ENCODE measurements at regions of chr7 and their contacts with region 1.

Region 1: DNA sequence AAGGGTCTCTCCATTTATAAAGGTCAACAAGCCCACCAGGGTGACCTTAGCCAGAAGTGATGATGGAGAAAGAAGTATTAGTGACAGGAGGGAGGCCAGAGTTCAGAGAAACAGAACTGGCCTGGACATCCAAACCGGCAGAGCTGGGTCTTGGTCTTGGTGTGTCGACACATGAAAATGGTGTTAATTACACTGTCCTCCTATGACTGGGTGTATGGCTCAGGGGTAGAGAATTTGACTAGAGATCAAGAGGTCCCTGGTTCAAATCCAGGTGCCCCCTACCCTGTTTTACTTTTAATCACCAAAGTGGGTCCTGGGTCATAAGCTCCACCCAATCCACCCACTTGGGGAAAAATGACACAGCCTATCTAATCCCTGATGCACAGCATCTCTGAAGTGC is 110.6 kb upstream of the ZNF746 start:
- DNase-seq: no peak
- ATAC-seq: no peak
- H3K4me3 ChIP-seq: no peak overlapping the region
- H3K27ac ChIP-seq: no peak overlapping the region
- H3K4me1 ChIP-seq: no peaks in the 10 kb centered on the region
- H3K27me3 ChIP-seq: no peaks in the 10 kb centered on the region
- CTCF ChIP-seq: no peak
- EP300 ChIP-seq: no peak
- POLR2A ChIP-seq: peak; percentile 48; the same call in 1 of the 2 replicates
- RAD21 ChIP-seq: no peak

Region 2: DNA sequence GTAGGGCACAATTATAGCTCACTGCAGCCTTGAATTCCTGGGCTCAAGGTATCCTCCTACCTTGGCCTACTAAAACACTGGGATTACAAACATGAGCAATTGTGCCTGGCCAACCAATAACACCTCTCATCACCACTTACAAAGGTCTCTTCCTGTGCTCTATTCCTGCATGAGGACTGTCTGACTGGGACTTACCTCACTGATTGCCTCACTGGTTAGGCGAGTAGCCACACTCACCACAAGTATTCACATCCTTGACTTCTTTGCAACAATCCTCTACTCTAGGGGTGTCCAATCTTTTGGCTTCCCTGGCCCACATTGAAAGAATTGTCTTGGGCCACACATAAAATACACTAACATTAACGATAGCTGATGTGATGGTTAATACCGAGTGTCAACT is 557.2 kb before region 1 on chr7:
- CTCF ChIA-PET with region 1: no interaction called
- POLR2A ChIA-PET with region 1: no interaction called
- in situ Hi-C with region 1: no loop called
- intact Hi-C with region 1: no loop called
- DNase-seq: no peak
- ATAC-seq: peak; percentile 21; the same call in 2 of the 3 replicates
- H3K4me3 ChIP-seq: no peak overlapping the region
- H3K27ac ChIP-seq: no peak overlapping the region
- H3K4me1 ChIP-seq: no peaks in the 10 kb centered on the region
- H3K27me3 ChIP-seq: peaks cover 5 to 6% of the 10 kb centered on the region in 2 experiments; a peak in 3 of 5 replicates
- CTCF ChIP-seq: no peak
- EP300 ChIP-seq: no peak
- POLR2A ChIP-seq: no peak
- RAD21 ChIP-seq: no peak

Region 3: GRCh38 chr7:149430192-149430591 is 178.0 kb before region 1 on chr7:
- CTCF ChIA-PET with region 1: no interaction called
- POLR2A ChIA-PET with region 1: no interaction called
- in situ Hi-C with region 1: no loop called
- intact Hi-C with region 1: no loop called
- DNase-seq: no peak
- ATAC-seq: peak; percentile 26; the same call in 1 of the 3 replicates
- H3K4me3 ChIP-seq: no peak overlapping the region
- H3K27ac ChIP-seq: no peak overlapping the region
- H3K4me1 ChIP-seq: no peaks in the 10 kb centered on the region; a peak in 2 of 5 replicates
- H3K27me3 ChIP-seq: no peaks in the 10 kb centered on the region
- CTCF ChIP-seq: no peak
- EP300 ChIP-seq: no peak
- POLR2A ChIP-seq: no peak
- RAD21 ChIP-seq: no peak

Region 4: GRCh38 chr7:149624419-149625339 is 16.5 kb after region 1 on chr7:
- CTCF ChIA-PET with region 1: interaction called, 3 read pairs
- POLR2A ChIA-PET with region 1: interaction called, 18 read pairs
- in situ Hi-C with region 1: no loop called
- intact Hi-C with region 1: no loop called
- DNase-seq: peak; percentile 93 to 99 (median 94)
- ATAC-seq: peak; percentile 97
- H3K4me3 ChIP-seq: peak overlapping the region; percentile 84
- H3K27ac ChIP-seq: peak overlapping the region; percentile 83
- H3K4me1 ChIP-seq: peaks cover 20 to 22% of the 10 kb centered on the region in 2 experiments
- H3K27me3 ChIP-seq: no peaks in the 10 kb centered on the region
- CTCF ChIP-seq: peak; percentile 87 to 93 (median 88)
- EP300 ChIP-seq: peak; percentile 44; the same call in 1 of the 2 replicates
- POLR2A ChIP-seq: peak; percentile 90
- RAD21 ChIP-seq: peak in 1 of 2 experiments; percentile 35; a peak in 1 of 4 replicates

Region 5: GRCh38 chr7:149771721-149772240 is 163.6 kb after region 1 on chr7:
- CTCF ChIA-PET with region 1: no interaction called
- POLR2A ChIA-PET with region 1: no interaction called
- in situ Hi-C with region 1: no loop called
- intact Hi-C with region 1: no loop called
- DNase-seq: peak; percentile 97 to 98 (median 98)
- ATAC-seq: peak; percentile 95
- H3K4me3 ChIP-seq: peak overlapping the region; percentile 59
- H3K27ac ChIP-seq: peak overlapping the region; percentile 79
- H3K4me1 ChIP-seq: peaks cover 16 to 70% of the 10 kb centered on the region in 2 experiments
- H3K27me3 ChIP-seq: no peaks in the 10 kb centered on the region
- CTCF ChIP-seq: no peak
- EP300 ChIP-seq: peak; percentile 67
- POLR2A ChIP-seq: peak; percentile 75
- RAD21 ChIP-seq: no peak